ENCODE measurements at regions of chr20 and their contacts with region 1.

Region 1: GRCh38 chr20:11890331-11891080 is 27.2 kb upstream of the BTBD3 start:
- DNase-seq: peak; percentile 91
- H3K4me3 Mint-ChIP-seq: peak overlapping the region; percentile 78
- H3K27ac Mint-ChIP-seq: peak overlapping the region; percentile 66
- H3K4me1 Mint-ChIP-seq: peaks cover 16% of the 10 kb centered on the region
- H3K27me3 Mint-ChIP-seq: peaks cover 29% of the 10 kb centered on the region

Region 2: GRCh38 chr20:10463622-10464021 is 1426.9 kb before region 1 on chr20:
- intact Hi-C with region 1: no loop called
- DNase-seq: no peak
- H3K4me3 Mint-ChIP-seq: no peak overlapping the region
- H3K27ac Mint-ChIP-seq: no peak overlapping the region
- H3K4me1 Mint-ChIP-seq: peaks cover 19% of the 10 kb centered on the region
- H3K27me3 Mint-ChIP-seq: no peaks in the 10 kb centered on the region

Region 3: GRCh38 chr20:11917663-11918062 is 27.2 kb after region 1 on chr20 and contains the start of gene BTBD3:
- intact Hi-C with region 1: no loop called
- DNase-seq: no peak
- H3K4me3 Mint-ChIP-seq: no peak within 1 kb of the TSS
- H3K27ac Mint-ChIP-seq: no peak within 1 kb of the TSS
- H3K4me1 Mint-ChIP-seq: peaks cover 4% of the 10 kb centered on the region
- H3K27me3 Mint-ChIP-seq: no peaks in the 10 kb centered on the region
- total RNA-seq, gene BTBD3: 14.8 and 14.9 TPM in 2 replicates

Region 4: GRCh38 chr20:13638496-13639222 is 1748.2 kb after region 1 on chr20 and contains the start of gene TASP1:
- intact Hi-C with region 1: loop called (anchors 5 kb)
- DNase-seq: peak; percentile 98
- H3K4me3 Mint-ChIP-seq: peak within 1 kb of the TSS; percentile 99
- H3K27ac Mint-ChIP-seq: peak within 1 kb of the TSS; percentile 85
- H3K4me1 Mint-ChIP-seq: peaks cover 20% of the 10 kb centered on the region
- H3K27me3 Mint-ChIP-seq: peaks cover 3% of the 10 kb centered on the region
- total RNA-seq, gene TASP1: 14.6 and 14.9 TPM in 2 replicates

Measured in activated CD4-positive, alpha-beta T cell treated with anti-CD3 and anti-CD28 coated beads, Interleukin-2, amount 10 ng/mL, durations not matched to agents 24 days and 14 days (primary cell).